Posterior vena cava (tissue), 2 donors: ENCODE measurements at regions of chr6 and their contacts with region 1.

Region 1: DNA sequence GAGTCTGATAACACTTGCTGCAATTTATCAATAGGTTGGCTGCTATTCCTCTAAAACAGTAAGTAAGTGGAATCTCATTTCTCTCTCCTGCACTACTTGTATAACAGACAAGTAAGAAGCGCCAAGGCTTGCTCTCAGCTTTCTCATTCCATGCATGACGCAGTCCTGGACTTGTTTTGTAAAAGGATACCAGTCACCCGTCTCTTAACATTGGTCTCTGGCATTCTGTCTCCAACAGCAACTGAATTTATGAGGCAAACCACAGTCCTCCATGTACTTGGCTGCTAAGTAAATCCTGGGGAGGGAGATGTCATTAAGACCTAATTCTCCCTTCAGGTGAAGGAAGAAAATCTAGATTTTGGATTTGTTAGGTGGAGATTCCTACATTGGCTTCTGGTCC is 115.4 kb downstream of the OPN5 start:
- DNase-seq: no peak

Region 2: DNA sequence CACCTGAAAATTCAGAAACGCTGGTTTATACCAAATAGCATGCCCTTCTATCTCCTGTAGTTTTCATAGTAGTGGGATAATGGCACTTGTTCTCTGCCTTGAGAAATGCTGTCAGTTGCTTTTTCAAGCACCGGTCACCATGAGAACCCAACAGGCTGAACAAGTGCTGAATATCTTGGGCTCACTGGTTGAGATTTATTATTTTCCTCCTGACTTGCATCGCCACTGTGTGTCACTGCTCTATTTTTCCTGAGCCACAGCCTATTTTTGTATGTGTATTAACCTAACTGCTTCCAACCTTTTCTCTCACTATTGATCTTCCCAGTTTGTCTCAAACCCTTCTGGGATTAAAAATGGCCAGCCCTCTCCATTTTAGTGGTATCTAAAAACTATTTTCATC is 43.5 kb before region 1 on chr6:
- intact Hi-C with region 1: loop called in 1 of 2 experiments (anchors 2 kb)
- DNase-seq: no peak